Activated naive CD4-positive, alpha-beta T cell treated with anti-CD3 and anti-CD28 coated beads for 36 hours (primary cell): ENCODE measurements at regions of chr2 and their contacts with region 1.

Region 1: GRCh38 chr2:227805578-227805977 is 8.1 kb upstream of the CCL20 start:
- DNase-seq: peak; percentile 60
- H3K4me3 Mint-ChIP-seq: peak overlapping the region; percentile 73
- H3K27ac Mint-ChIP-seq: peak overlapping the region; percentile 90
- H3K4me1 Mint-ChIP-seq: peaks cover 13% of the 10 kb centered on the region
- H3K27me3 Mint-ChIP-seq: peaks cover 1% of the 10 kb centered on the region

Region 2: GRCh38 chr2:227774011-227774624 is 31.5 kb before region 1 on chr2:
- CTCF ChIA-PET with region 1: interaction called, 4 read pairs
- intact Hi-C with region 1: loop called (anchors 1 kb)
- DNase-seq: peak; percentile 14
- H3K4me3 Mint-ChIP-seq: no peak overlapping the region
- H3K27ac Mint-ChIP-seq: peak overlapping the region; percentile 67
- H3K4me1 Mint-ChIP-seq: peaks cover 17% of the 10 kb centered on the region
- H3K27me3 Mint-ChIP-seq: no peaks in the 10 kb centered on the region

Region 3: DNA sequence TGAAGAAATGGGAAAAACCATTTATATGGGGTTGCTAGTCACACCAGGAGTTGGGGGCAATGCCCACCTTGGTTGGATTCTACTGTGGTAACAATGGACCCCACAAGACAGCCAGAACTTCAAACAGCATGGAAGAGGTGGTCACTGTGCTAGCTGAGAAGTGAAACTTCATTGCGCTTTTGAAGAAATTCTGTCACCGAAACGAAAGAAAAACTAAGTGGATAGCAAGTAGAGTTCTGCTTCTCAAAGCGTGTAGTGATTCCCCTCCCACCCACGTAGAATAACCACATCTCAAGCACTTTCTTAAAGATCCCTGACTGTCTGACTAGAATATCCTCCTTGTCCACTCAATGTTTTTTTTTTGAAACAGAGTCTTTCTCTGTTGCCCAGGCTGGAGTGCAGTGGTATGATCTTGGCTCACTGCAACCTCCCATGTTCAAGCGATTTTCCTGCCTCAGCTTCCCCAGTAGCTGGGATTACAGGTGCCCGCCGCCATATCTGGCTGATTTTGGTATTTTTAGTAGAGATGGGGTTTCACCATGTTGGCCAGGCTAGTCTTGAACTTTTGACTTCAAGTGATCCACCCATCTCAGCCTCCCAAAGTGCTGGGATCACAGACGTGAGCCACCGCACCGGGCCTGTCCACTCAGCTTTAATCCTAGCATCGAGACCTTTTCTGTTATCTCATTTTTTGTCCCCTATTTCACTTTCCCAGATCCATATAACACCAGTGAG is 22.0 kb before region 1 on chr2:
- CTCF ChIA-PET with region 1: interaction called, 3 read pairs
- intact Hi-C with region 1: loop called (anchors 1 kb)
- DNase-seq: no peak
- H3K4me3 Mint-ChIP-seq: peak overlapping the region; percentile 49
- H3K27ac Mint-ChIP-seq: no peak overlapping the region
- H3K4me1 Mint-ChIP-seq: peaks cover 10% of the 10 kb centered on the region
- H3K27me3 Mint-ChIP-seq: peaks cover 6% of the 10 kb centered on the region